Gastrocnemius medialis (tissue), 4 donors: ENCODE measurements at regions of chr19 and their contacts with region 1.

Region 1: GRCh38 chr19:11987405-11988281 is 22.8 kb downstream of the ZNF763 start:
- DNase-seq: peak; percentile 93 to 96
- ATAC-seq: peak; percentile 89 to 90
- H3K4me3 ChIP-seq: peak overlapping the region; percentile 73 to 94 (median 91)
- H3K27ac ChIP-seq: peak overlapping the region; percentile 87 to 96 (median 94)
- H3K4me1 ChIP-seq: peaks cover 0 to 6% of the 10 kb centered on the region in 2 donors
- H3K27me3 ChIP-seq: no peaks in the 10 kb centered on the region
- CTCF ChIP-seq: no peak
- POLR2A ChIP-seq: peak; percentile 74 to 83

Region 2: DNA sequence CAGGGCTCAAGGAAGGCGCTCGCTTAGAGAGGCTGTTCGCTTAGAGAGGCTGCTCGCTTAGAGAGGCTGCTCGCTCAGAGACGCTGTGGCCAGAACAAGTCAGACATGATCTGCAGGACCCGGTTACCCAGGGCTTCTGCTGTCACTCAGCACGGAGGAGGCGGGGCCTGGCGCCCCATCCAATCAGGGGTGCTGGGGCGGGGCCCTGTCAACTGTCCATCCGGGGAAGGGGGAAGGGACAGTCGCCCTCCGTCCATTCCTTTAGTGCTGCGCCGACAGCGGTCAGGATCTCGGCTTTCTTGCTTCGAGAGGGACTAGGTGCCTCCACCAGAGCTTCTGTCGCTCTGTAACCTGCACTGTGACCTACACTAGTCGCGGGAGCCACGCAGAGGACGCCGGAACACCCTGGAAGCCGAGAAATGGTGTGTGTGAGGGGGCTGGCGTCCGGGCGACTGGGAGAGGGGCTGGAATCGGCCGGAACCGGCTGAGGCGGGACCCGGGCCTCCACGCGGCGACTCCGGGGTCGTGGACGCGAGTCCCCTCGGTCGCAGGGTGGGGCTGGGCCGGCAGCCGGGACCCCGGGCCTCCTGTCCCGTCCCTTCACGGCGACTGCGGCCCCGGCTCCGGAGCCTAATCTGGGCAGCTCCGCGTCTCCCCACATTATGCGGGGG is 173.5 kb before region 1 on chr19 and contains the start of gene ZNF440:
- in situ Hi-C with region 1: no loop called
- intact Hi-C with region 1: loop called (anchors 1 kb)
- DNase-seq: peak; percentile 91 to 93
- ATAC-seq: peak; percentile 99
- H3K4me3 ChIP-seq: peak within 1 kb of the TSS; percentile 76 to 97 (median 81)
- H3K27ac ChIP-seq: peak within 1 kb of the TSS; percentile 80 to 96 (median 88)
- H3K4me1 ChIP-seq: peaks cover 7 to 10% of the 10 kb centered on the region in 2 donors
- H3K27me3 ChIP-seq: no peaks in the 10 kb centered on the region
- CTCF ChIP-seq: peak in 1 of 5 experiments; percentile 15
- POLR2A ChIP-seq: peak; percentile 71 to 89
- total RNA-seq, gene ZNF440: 2.5 to 5.5 (median 4.2) TPM

Region 3: GRCh38 chr19:11913680-11914079 is 74.0 kb before region 1 on chr19:
- in situ Hi-C with region 1: loop called in 1 of 4 experiments (anchors 10 kb)
- intact Hi-C with region 1: no loop called
- DNase-seq: no peak
- ATAC-seq: no peak
- H3K4me3 ChIP-seq: no peak overlapping the region
- H3K27ac ChIP-seq: no peak overlapping the region
- H3K4me1 ChIP-seq: no peaks in the 10 kb centered on the region
- H3K27me3 ChIP-seq: no peaks in the 10 kb centered on the region
- CTCF ChIP-seq: no peak
- POLR2A ChIP-seq: no peak

Region 4: DNA sequence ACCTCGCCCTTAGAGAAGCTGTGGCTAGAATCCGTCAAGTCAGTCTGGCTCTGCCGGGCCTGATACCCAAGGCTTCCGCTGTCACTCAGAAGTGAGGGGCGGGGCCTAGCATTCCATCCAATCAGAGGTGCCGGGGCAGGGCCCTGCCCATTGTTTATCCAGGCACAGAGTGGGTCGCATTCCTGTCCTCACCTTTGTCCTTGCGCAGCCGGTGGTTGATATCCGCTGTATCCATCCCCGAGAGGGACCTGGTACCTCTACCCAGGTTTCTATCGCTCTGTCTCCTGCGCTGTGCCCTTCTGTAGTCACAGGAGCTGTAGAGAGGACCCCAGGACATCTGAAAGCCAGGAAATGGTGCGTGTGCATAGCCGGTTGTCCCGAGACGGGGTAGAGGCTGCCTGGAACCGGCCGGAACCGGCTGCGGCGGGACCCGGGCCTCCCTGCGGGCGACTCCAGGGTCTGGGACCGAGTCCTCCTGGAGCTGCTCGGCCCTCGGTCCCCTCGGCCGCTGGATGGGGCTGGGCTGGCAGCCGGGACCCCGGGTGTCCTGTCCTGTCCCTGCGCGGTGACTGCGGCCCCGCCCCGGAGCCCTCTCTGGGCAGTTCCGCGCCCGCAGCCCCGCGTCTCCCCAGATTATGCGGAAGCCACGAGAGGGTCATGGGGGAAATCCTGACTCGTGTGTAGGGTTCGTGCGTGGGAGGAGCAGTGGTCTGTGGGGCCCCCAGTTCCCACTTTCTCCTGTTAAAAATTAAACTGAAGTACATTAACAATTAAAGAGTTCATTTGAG is 22.6 kb before region 1 on chr19 and contains the start of gene ZNF763:
- in situ Hi-C with region 1: no loop called
- intact Hi-C with region 1: loop called (anchors 1 kb)
- DNase-seq: peak; percentile 81 to 89
- ATAC-seq: peak; percentile 96 to 98
- H3K4me3 ChIP-seq: peak within 1 kb of the TSS; percentile 67 to 88 (median 76)
- H3K27ac ChIP-seq: peak within 1 kb of the TSS; percentile 78 to 88 (median 86)
- H3K4me1 ChIP-seq: peaks cover 11 to 15% of the 10 kb centered on the region in 2 donors
- H3K27me3 ChIP-seq: no peaks in the 10 kb centered on the region
- CTCF ChIP-seq: no peak
- POLR2A ChIP-seq: peak; percentile 28 to 56
- total RNA-seq, gene ZNF763: 0.46 to 0.80 (median 0.54) TPM

Region 5: GRCh38 chr19:13022859-13023636 is 1035.4 kb after region 1 on chr19:
- in situ Hi-C with region 1: no loop called
- intact Hi-C with region 1: loop called (anchors 5 kb)
- DNase-seq: peak; percentile 82 to 91
- ATAC-seq: peak; percentile 64 to 71
- H3K4me3 ChIP-seq: peak overlapping the region; percentile 41 to 55 (median 51)
- H3K27ac ChIP-seq: peak overlapping the region; percentile 97 to 100 (median 99)
- H3K4me1 ChIP-seq: peaks cover 77 to 91% of the 10 kb centered on the region in 2 donors
- H3K27me3 ChIP-seq: no peaks in the 10 kb centered on the region
- CTCF ChIP-seq: peak in 2 of 5 experiments; percentile 29 to 34
- POLR2A ChIP-seq: peak in 1 of 2 donors; percentile 13